AG04450 (cell line): ENCODE measurements at regions of chr12 and their contacts with region 1.

Region 1: DNA sequence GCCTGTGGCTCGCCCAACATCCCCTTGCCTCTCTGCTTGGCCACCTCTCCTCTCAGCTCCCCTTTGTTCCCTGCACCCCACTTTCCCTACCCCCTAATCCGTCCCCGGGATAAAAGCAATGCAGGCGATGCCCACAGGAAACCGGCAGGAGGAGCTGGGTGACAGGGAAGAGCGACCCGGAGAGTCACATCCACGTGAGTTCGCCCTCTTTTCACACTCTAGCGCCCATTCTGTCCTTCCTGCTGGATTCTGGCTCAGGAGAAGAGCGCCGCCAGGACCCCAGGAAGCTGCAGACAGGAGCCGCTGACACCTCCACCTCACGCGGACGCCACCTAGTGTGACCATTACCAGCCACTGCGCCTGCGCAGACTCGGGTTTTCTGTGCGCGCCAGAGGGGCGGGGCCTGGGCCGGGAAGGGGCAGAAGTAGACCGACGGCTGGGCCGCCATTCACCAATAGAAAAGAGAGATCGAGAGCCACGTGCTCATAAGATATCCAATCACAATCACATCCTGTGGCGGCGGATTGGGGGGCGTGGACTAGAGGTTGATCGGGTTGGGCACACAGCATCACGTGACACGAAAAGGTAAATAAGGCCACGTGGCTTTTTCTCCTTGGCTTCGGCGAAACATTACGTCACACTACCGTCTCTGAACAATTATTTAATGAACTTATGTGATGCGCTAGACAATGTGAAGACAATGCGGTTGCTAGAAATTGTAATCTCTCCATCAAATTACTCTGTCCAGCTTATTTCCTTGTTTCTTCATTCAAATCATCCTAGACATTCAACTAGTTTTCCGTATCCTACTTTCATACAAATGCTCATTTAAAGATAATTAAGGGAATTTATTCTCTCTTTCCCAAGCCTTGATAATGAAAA is 10.1 kb downstream of the PLA2G1B start:
- DNase-seq: peak; percentile 97
- H3K4me3 ChIP-seq: peak overlapping the region; percentile 81
- H3K27ac ChIP-seq: peak overlapping the region; percentile 65
- H3K27me3 ChIP-seq: peaks cover 13% of the 10 kb centered on the region
- CTCF ChIP-seq: peak; percentile 77

Region 2: DNA sequence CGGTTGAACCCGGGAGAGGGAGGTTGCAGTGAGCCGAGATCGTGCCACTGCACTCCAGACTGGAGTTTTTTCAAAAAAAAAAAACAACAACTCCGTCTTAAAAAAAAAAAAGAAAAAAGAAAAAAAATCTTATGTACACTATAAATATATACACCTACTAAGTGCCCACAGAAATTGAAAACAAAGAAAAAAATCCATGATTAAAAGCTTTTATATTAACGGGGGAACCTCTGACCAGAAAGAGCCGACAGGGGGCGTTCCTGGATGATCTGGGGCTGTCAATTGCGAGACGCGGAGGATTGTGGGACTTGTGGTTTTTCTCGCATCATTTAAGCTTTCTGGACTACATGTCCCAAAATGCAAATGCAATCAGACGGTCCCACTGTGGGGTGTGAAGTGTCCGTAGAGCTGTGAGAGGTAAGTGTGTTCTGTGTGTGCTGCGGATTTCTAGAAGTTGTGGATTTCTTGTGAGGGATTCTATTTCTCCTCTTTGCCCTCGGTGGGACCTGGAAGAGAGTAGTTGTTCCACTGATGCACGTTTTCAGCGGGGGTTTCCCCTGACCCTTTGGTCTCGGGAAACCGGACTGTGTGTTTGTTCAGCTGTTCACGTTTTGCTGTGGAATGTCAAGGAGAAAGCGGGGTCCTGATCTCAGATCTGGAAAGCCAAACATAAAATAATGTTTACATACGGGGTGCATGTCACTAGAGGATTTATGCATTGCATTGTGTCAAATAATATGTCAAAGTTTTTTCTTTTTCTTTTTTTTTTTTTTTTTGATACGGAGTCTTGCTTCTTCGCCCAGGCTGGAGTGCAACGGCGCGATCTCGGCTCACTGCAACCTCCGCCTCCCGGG is 15.3 kb before region 1 on chr12 and contains the start of gene SIRT4:
- CTCF ChIA-PET with region 1: interaction called, 32 read pairs
- POLR2A ChIA-PET with region 1: interaction called, 10 read pairs
- DNase-seq: peak; percentile 85
- H3K4me3 ChIP-seq: peak within 1 kb of the TSS; percentile 76
- H3K27ac ChIP-seq: peak within 1 kb of the TSS; percentile 86
- H3K27me3 ChIP-seq: no peaks in the 10 kb centered on the region
- CTCF ChIP-seq: peak; percentile 80
- polyA plus RNA-seq, gene SIRT4: 1.4 and 1.9 TPM in 2 replicates

Region 3: GRCh38 chr12:120327593-120327992 is 10.1 kb after region 1 on chr12 and contains the start of gene PLA2G1B:
- CTCF ChIA-PET with region 1: interaction called, 11 read pairs
- POLR2A ChIA-PET with region 1: no interaction called
- DNase-seq: no peak
- H3K4me3 ChIP-seq: no peak within 1 kb of the TSS
- H3K27ac ChIP-seq: no peak within 1 kb of the TSS
- H3K27me3 ChIP-seq: peaks cover 22% of the 10 kb centered on the region
- CTCF ChIP-seq: no peak
- polyA plus RNA-seq, gene PLA2G1B: 0.20 and 0.41 TPM in 2 replicates

Region 4: DNA sequence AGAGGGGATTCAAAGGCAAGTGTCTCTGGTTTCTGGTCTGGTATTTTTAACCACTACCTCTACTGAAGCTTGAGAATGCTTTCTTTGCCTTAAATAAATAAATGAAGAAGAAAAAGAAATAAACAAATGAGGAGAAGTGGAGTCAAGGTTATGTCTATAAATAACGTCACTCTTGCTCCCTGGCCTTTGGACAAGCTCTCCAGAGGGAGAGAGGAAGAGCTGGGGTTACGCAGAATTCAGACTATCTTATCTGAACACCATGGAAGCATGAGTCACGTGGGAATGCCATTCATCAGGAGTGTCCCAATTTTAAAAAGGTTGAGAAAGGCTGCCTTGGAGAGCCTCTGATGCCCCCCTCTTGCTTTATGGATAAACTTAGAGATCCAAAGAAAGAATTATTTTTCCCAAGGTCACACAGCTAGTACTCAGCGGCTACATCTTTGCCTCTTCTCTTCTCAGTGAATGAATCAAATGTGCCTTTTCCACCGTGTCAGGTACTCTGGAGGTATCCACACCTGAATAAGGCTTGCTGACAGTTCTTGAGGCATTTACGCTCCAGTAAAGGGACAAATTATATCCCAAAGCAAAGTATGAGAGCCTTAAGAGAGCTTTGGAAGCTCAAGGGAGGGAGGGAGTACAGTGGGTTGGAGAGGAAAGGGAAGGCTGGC is 64.4 kb after region 1 on chr12:
- CTCF ChIA-PET with region 1: no interaction called
- POLR2A ChIA-PET with region 1: no interaction called
- DNase-seq: peak; percentile 8
- H3K4me3 ChIP-seq: no peak overlapping the region
- H3K27ac ChIP-seq: no peak overlapping the region
- H3K27me3 ChIP-seq: peaks cover 27% of the 10 kb centered on the region
- CTCF ChIP-seq: no peak

Region 5: DNA sequence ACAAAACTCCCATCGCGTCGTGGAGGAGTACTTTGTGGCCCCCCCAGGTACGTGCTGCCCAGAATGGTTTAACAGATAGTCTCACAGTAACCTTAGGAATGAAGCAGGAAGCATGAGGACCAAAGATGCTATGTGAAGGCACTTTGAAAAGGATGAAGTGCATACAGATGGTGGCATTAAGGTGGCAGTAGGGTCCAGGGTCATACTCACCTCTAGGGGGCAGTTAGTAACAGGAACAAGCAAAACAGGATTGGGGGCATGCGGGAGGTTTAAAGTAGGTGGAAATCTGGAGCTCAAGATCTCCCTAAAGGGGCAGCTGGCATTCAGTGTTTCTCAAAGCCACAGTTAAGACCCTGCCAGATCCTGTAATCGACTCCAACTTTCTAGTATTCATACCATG is 139.7 kb after region 1 on chr12:
- CTCF ChIA-PET with region 1: interaction called, 11 read pairs
- POLR2A ChIA-PET with region 1: no interaction called
- DNase-seq: no peak
- H3K4me3 ChIP-seq: no peak overlapping the region
- H3K27ac ChIP-seq: no peak overlapping the region
- H3K27me3 ChIP-seq: no peaks in the 10 kb centered on the region
- CTCF ChIP-seq: peak; percentile 34; the same call in 1 of the 2 replicates

Region 6: GRCh38 chr12:120713861-120714482 is 396.5 kb after region 1 on chr12:
- CTCF ChIA-PET with region 1: interaction called, 10 read pairs
- POLR2A ChIA-PET with region 1: no interaction called
- DNase-seq: peak; percentile 58
- H3K4me3 ChIP-seq: no peak overlapping the region
- H3K27ac ChIP-seq: no peak overlapping the region
- H3K27me3 ChIP-seq: no peaks in the 10 kb centered on the region
- CTCF ChIP-seq: peak; percentile 88